Dendritic cell treated with granulocyte-macrophage colony-stimulating factor and Interleukin-4, amounts not matched to agents 40 ng/mL and 50 ng/mL, for 4 days (primary cell): ENCODE measurements at regions of chr20 and their contacts with region 1.

Region 1: DNA sequence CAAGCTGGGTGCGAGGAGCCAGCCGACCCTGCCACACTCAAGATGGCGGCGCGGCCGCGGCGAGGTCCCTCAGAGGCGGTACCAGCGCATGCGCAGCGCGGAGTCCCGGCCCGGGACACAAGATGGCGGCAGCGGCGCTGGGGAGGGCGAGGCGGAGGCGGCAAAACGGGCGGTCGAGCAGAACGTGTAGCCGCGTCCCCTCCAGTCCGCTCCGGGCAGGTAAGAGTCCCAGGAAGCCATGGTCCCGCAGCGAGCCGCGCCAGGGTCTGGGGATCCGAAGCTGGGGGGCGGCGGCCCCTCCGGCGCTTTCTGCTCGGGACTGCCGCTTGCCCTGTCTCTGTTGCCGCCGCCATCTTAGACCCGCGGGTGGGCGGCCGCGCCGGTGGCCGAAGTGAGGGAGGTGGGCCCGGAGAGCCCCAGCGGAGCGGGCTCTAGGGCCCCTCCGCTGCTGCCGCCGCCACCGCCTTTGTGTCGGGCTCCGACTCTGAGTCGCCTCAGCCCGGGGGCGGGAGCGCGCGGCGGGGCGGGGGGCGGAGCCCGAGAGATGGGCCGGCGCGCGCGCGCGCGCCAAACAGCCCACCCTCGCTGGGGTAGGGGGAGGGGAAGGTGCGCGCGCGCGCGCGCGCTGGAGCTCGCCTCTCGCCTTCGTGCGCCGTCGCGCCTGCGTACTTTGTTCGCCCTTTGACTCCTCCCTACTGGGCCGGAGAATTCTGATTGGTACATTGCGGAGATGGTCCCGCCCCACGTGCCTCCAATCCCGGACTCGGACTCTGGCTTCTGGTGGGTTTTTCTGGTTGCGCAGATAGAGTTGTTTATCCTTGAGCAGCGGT is at the start of gene PCIF1:
- H3K4me3 Mint-ChIP-seq: peak within 1 kb of the TSS; percentile 99
- H3K27ac Mint-ChIP-seq: peak within 1 kb of the TSS; percentile 100
- H3K4me1 Mint-ChIP-seq: peaks cover 18% of the 10 kb centered on the region
- H3K27me3 Mint-ChIP-seq: no peaks in the 10 kb centered on the region

Region 2: GRCh38 chr20:45857114-45857881 is 77.5 kb before region 1 on chr20 and contains the starts of genes ACOT8 and ZSWIM3:
- intact Hi-C with region 1: loop called (anchors 1 kb)
- H3K4me3 Mint-ChIP-seq: peak within 1 kb of the TSS; percentile 91
- H3K27ac Mint-ChIP-seq: peak within 1 kb of the TSS; percentile 96
- H3K4me1 Mint-ChIP-seq: peaks cover 59% of the 10 kb centered on the region
- H3K27me3 Mint-ChIP-seq: no peaks in the 10 kb centered on the region

Region 3: DNA sequence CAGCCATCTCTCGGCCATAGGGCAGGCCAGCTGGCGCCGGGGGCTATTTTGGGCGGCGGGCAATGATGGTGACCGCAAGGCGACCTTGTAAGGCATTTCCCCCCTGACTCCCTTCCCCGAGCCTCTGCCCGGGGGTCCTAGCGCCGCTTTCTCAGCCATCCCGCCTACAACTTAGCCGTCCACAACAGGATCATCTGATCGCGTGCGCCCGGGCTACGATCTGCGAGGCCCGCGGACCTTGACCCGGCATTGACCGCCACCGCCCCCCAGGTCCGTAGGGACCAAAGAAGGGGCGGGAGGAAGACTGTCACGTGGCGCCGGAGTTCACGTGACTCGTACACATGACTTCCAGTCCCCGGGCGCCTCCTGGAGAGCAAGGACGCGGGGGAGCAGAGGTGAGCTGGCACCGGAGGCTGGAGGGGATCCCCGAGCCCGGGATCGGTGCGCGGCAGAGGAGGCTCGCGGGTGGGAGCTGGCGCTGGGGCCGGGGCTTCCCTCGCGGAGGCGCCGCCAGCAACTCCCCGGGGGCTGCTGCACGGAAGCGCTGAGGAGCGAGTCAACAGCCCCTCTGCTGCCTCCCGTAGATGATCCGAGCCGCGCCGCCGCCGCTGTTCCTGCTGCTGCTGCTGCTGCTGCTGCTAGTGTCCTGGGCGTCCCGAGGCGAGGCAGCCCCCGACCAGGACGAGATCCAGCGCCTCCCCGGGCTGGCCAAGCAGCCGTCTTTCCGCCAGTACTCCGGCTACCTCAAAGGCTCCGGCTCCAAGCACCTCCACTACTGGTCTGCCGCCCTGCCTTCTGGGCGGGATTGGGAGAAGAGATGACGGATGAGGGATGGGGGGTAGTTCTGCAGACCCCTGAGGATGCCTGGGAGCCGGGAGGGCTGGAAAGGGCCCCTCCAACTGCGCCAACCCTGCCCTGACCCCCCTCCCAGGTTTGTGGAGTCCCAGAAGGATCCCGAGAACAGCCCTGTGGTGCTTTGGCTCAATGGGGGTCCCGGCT is 43.5 kb before region 1 on chr20 and contains the starts of genes CTSA and NEURL2:
- intact Hi-C with region 1: loop called (anchors 1 kb)
- H3K4me3 Mint-ChIP-seq: peak within 1 kb of the TSS; percentile 85
- H3K27ac Mint-ChIP-seq: peak within 1 kb of the TSS; percentile 84
- H3K4me1 Mint-ChIP-seq: peaks cover 44% of the 10 kb centered on the region
- H3K27me3 Mint-ChIP-seq: no peaks in the 10 kb centered on the region

Region 4: GRCh38 chr20:45910670-45911485 is 23.9 kb before region 1 on chr20:
- intact Hi-C with region 1: loop called (anchors 1 kb)
- H3K4me3 Mint-ChIP-seq: peak overlapping the region; percentile 73
- H3K27ac Mint-ChIP-seq: peak overlapping the region; percentile 87
- H3K4me1 Mint-ChIP-seq: peaks cover 55% of the 10 kb centered on the region
- H3K27me3 Mint-ChIP-seq: peaks cover 5% of the 10 kb centered on the region

Region 5: DNA sequence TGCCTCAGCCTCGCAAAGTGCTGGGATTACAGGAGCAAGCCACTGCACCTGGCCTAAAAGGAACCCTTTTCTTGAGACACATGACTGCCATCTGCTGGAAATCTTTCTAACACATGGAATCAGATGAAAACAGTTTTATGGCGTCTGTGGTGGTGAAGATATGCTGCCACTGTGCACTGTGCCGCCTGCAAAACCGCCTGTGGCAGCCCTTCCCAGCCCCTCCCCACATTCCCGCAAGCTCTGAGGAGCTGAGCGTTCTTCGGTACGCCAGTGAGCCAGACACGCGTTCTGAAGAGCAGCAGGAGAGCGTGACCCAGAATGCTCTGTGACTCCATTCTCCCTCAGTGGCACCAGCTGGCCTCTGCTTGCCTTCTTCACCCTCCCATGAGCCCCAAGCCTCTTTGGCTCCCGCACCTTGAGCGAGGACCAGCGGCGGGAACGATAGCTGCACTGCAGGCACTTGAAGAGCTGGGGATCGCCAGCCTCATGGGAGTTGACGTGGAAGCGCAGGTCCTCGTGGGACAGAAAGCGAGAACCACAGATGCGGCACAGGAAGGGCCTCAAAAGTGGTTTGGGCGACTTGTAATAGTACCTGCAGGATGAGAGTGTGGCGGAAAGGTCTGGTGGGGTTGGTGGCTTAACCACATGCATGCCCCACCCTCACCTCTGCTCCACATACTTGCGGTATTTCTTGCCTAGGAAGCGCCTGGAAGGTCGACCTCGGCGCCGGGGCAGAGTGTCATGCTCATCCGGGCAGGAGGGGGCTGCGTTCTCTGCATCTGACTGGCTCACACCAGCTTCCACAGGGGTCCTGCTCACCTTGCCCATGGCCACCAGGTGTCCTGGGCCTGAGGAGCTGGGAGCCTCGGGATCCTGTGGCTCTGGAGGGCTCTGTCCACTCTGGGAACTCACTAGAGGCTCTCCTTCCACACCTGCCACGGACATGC is 28.5 kb after region 1 on chr20:
- intact Hi-C with region 1: no loop called
- H3K4me3 Mint-ChIP-seq: no peak overlapping the region
- H3K27ac Mint-ChIP-seq: peak overlapping the region; percentile 10
- H3K4me1 Mint-ChIP-seq: peaks cover 5% of the 10 kb centered on the region
- H3K27me3 Mint-ChIP-seq: no peaks in the 10 kb centered on the region